Left cardiac atrium (tissue), 4 donors: ENCODE measurements at regions of chr4 and their contacts with region 1.

Region 1: GRCh38 chr4:41095973-41096372 is 118.4 kb downstream of the APBB2 start:
- DNase-seq: no peak
- ATAC-seq: peak in 1 of 2 donors; percentile 69

Region 2: DNA sequence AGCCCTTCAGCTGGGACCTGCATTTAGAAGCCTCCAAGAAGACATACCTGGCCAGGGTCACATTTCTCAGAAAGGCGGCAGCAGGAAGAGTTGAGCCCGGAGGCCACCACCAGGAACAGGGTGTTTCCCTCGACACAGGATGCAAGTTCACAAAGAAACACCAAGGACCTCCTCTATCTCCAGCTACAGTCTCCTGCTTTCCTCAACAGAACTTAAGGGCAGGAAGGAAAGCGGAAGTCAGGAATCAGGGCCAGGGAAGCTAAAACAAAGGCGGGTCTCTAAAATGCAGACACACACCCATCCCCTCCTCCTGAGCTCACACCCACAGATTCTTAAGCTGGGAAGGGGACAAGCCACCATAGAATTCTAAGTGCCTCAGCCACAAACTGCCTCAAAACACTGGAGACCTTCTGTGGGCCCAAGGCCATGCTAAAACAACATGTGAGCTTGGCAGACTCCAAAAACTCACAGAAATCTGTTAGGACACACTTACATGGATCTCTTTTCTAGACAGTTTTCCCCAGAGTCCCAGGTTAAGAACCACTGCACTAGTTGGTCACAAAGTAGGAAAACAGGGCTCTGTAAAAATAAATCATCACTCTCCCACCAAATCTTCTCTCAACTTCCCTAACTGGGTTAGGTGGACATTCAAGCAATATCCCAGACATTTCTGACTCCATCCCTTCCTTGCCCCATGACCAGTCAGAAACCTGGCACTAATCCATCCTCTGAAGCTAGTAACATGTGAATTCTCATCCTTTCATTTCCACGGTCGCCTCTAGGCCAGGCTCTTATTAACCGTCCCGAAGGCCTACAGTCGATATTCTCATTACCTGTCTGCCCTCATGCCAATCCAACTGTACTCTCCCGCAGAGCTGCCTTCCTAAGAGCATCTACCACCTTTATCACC is 44.9 kb before region 1 on chr4:
- intact Hi-C with region 1: loop called in 1 of 2 experiments (anchors 5 kb)
- DNase-seq: peak; percentile 29
- ATAC-seq: peak; percentile 43 to 60

Region 3: GRCh38 chr4:41061482-41062185 is 34.3 kb before region 1 on chr4:
- intact Hi-C with region 1: no loop called
- DNase-seq: no peak
- ATAC-seq: no peak

Region 4: GRCh38 chr4:42716996-42717395 is 1621.0 kb after region 1 on chr4:
- intact Hi-C with region 1: no loop called
- DNase-seq: no peak
- ATAC-seq: no peak